H1 (cell line): ENCODE measurements at regions of chr17 and their contacts with region 1.

Region 1: DNA sequence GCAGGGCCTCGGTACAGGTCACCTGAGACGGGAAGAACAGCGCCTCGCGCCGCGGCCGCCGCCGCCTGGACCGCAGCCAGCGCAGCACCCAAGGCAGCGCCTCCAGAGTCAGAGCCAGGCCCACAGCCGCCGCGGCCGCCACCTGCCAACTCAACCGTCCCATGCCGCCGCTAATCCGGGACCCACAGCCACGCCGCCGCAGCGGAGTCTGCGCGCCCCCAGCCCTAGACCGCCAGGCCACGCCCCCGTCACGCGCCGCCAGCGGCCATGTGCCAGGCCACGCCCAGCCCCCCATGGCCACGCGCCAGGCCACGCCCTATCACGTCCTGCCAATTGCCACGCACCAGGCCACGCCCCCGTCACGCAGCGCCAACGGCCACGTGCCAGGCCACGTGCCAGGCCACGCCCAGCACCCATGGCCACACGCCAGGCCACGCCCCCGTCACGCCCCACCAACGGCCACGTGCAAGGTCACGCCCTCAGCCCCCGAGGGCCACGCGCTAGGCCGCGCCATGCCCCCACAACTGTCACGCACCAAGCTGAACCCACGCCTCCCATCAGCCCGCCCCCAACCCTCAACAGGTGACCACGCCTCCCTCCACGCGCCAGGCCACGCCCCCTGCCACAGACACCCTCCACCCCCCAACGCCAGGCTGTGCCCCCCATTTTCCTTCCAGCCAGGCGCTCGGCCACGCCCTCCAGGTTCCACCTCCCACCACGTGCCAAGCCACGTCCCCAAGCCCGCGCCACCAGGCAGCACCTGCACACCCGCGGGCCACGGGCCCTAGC is at the start of gene PLD6:
- DNase-seq: no peak
- H3K4me3 ChIP-seq: no peak within 1 kb of the TSS
- H3K27ac ChIP-seq: no peak within 1 kb of the TSS
- H3K4me1 ChIP-seq: no peaks in the 10 kb centered on the region; a peak in 1 of 7 replicates
- H3K27me3 ChIP-seq: no peaks in the 10 kb centered on the region
- CTCF ChIP-seq: no peak
- EP300 ChIP-seq: no peak
- POLR2A ChIP-seq: no peak
- RAD21 ChIP-seq: no peak
- total RNA-seq, gene PLD6: 0.22 TPM in 1 of 2 replicates, not detected in the other

Region 2: GRCh38 chr17:17151962-17152361 is 54.4 kb before region 1 on chr17:
- CTCF ChIA-PET with region 1: no interaction called
- POLR2A ChIA-PET with region 1: no interaction called
- DNase-seq: no peak
- H3K4me3 ChIP-seq: no peak overlapping the region
- H3K27ac ChIP-seq: no peak overlapping the region
- H3K4me1 ChIP-seq: no peaks in the 10 kb centered on the region
- H3K27me3 ChIP-seq: no peaks in the 10 kb centered on the region
- CTCF ChIP-seq: no peak
- EP300 ChIP-seq: no peak
- POLR2A ChIP-seq: no peak
- RAD21 ChIP-seq: no peak

Region 3: GRCh38 chr17:17179371-17179827 is 26.9 kb before region 1 on chr17:
- CTCF ChIA-PET with region 1: no interaction called
- POLR2A ChIA-PET with region 1: no interaction called
- DNase-seq: no peak
- H3K4me3 ChIP-seq: no peak overlapping the region
- H3K27ac ChIP-seq: no peak overlapping the region
- H3K4me1 ChIP-seq: no peaks in the 10 kb centered on the region
- H3K27me3 ChIP-seq: no peaks in the 10 kb centered on the region
- CTCF ChIP-seq: no peak
- EP300 ChIP-seq: no peak
- POLR2A ChIP-seq: no peak
- RAD21 ChIP-seq: no peak

Region 4: DNA sequence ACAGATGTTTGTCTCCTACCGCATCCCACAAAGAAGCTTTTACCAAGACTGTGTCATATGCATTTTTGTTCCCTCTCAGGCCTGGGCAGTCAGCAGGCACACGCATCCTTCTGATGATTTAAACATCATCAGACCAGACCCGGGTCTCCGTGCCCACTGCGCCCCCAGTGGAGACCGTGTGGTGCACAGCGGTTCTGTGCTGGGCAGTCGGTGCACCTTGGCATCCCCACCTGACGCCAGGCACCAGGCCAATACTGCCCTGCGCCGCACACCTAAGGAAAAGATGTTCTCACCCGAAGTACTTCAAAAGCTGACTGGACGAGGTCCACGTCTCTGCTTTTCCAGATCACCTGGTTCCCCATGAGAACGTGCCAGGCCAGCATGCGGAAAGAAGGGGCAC is 10.5 kb after region 1 on chr17:
- CTCF ChIA-PET with region 1: interaction called, 3 read pairs
- POLR2A ChIA-PET with region 1: interaction called, 12 read pairs
- DNase-seq: no peak
- H3K4me3 ChIP-seq: no peak overlapping the region
- H3K27ac ChIP-seq: no peak overlapping the region
- H3K4me1 ChIP-seq: no peaks in the 10 kb centered on the region; a peak in 1 of 7 replicates
- H3K27me3 ChIP-seq: no peaks in the 10 kb centered on the region
- CTCF ChIP-seq: peak in 2 of 3 experiments; percentile 42 to 50; a peak in 2 of 4 replicates
- EP300 ChIP-seq: no peak
- POLR2A ChIP-seq: no peak
- RAD21 ChIP-seq: no peak; a peak in 1 of 4 replicates